ENCODE measurements at regions of chr18 and their contacts with region 1.

Region 1: GRCh38 chr18:62131301-62131909 is 55.5 kb downstream of the PIGN start:
- DNase-seq: peak; percentile 72
- H3K4me3 ChIP-seq: no peak overlapping the region
- H3K27ac ChIP-seq: no peak overlapping the region
- H3K4me1 ChIP-seq: peaks cover 16% of the 10 kb centered on the region
- H3K27me3 ChIP-seq: no peaks in the 10 kb centered on the region
- CTCF ChIP-seq: peak; percentile 70 to 79
- POLR2A ChIP-seq: no peak

Region 2: DNA sequence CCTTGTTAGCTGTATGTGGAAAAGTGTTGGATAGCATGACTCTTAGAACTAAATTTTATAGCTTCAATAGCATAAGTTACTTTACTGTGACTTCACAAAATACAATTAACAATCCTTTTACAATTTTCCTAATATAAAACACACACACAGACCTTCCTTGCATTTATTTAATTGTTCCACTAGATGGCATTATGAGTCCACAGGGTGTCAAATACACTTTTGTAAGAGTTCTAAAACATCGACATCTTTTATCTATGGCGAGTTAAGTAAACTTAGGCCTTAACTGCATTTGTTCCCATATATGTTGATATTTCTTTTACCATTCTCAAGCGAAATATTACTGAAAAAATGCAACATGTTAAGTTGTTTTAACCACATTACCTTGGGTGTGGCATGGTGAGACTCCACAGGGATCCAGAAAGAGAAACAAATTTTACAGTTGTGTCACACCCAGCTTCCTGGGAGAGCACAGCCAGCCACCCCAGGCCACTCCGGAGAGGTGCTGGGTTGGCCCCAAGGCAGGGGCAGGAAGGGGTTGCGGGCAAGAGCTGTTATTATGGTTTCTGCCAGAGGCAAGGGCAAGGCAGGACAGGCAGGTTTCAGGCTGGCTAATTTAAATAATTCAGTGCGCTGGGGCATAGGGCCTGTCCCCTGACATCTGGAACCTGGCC is 1446.4 kb before region 1 on chr18:
- CTCF ChIA-PET with region 1: no interaction called
- POLR2A ChIA-PET with region 1: no interaction called
- dilution Hi-C with region 1: no loop called
- intact Hi-C with region 1: loop called (anchors 5 kb)
- DNase-seq: peak; percentile 57
- H3K4me3 ChIP-seq: no peak overlapping the region
- H3K27ac ChIP-seq: no peak overlapping the region
- H3K4me1 ChIP-seq: no peaks in the 10 kb centered on the region
- H3K27me3 ChIP-seq: peaks cover 0 to 1% of the 10 kb centered on the region in 2 experiments
- CTCF ChIP-seq: peak; percentile 35 to 37
- POLR2A ChIP-seq: no peak

Region 3: DNA sequence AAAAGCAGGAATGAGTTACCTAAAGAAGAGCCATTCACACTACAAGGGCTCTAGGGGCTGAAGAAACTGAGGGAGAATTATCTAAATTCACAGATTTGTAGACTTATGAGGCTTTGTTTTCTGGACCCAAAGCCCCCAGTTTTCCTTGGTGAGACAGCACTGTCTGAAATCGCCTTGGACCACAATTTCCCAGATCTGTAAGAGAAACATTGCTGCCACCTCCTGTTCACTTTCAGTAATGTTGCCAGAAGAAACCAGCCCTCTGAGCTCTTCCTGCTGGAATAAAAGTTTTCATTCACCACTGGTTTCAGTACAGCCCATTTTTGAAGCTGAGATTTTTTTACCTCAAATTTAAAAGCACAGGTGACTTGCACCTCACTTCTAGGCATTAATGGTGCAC is 628.9 kb before region 1 on chr18:
- CTCF ChIA-PET with region 1: interaction called, 57 read pairs
- POLR2A ChIA-PET with region 1: no interaction called
- dilution Hi-C with region 1: no loop called
- intact Hi-C with region 1: loop called (anchors 1 kb)
- DNase-seq: peak; percentile 65
- H3K4me3 ChIP-seq: no peak overlapping the region
- H3K27ac ChIP-seq: no peak overlapping the region
- H3K4me1 ChIP-seq: no peaks in the 10 kb centered on the region
- H3K27me3 ChIP-seq: peaks cover 0 to 2% of the 10 kb centered on the region in 2 experiments
- CTCF ChIP-seq: peak; percentile 58 to 64
- POLR2A ChIP-seq: no peak

Region 4: GRCh38 chr18:61581578-61582201 is 549.7 kb before region 1 on chr18:
- CTCF ChIA-PET with region 1: interaction called, 89 read pairs
- POLR2A ChIA-PET with region 1: no interaction called
- dilution Hi-C with region 1: no loop called
- intact Hi-C with region 1: loop called (anchors 1 kb)
- DNase-seq: peak; percentile 77
- H3K4me3 ChIP-seq: peak overlapping the region; percentile 40 to 56 (median 54)
- H3K27ac ChIP-seq: peak overlapping the region; percentile 25
- H3K4me1 ChIP-seq: peaks cover 18% of the 10 kb centered on the region
- H3K27me3 ChIP-seq: no peaks in the 10 kb centered on the region
- CTCF ChIP-seq: peak; percentile 97
- POLR2A ChIP-seq: no peak

Region 5: GRCh38 chr18:61833387-61833786 is 298.0 kb before region 1 on chr18:
- CTCF ChIA-PET with region 1: interaction called, 8 read pairs
- POLR2A ChIA-PET with region 1: no interaction called
- dilution Hi-C with region 1: no loop called
- intact Hi-C with region 1: loop called (anchors 10 kb)
- DNase-seq: peak; percentile 93
- H3K4me3 ChIP-seq: peak overlapping the region in 1 of 3 experiments; percentile 31
- H3K27ac ChIP-seq: peak overlapping the region; percentile 75
- H3K4me1 ChIP-seq: peaks cover 43% of the 10 kb centered on the region
- H3K27me3 ChIP-seq: no peaks in the 10 kb centered on the region
- CTCF ChIP-seq: no peak
- POLR2A ChIP-seq: no peak

Region 6: GRCh38 chr18:61901323-61901986 is 229.9 kb before region 1 on chr18:
- CTCF ChIA-PET with region 1: interaction called, 15 read pairs
- POLR2A ChIA-PET with region 1: no interaction called
- dilution Hi-C with region 1: no loop called
- intact Hi-C with region 1: loop called (anchors 1 kb)
- DNase-seq: peak; percentile 74
- H3K4me3 ChIP-seq: no peak overlapping the region
- H3K27ac ChIP-seq: no peak overlapping the region
- H3K4me1 ChIP-seq: peaks cover 4% of the 10 kb centered on the region
- H3K27me3 ChIP-seq: no peaks in the 10 kb centered on the region
- CTCF ChIP-seq: peak; percentile 91 to 95
- POLR2A ChIP-seq: no peak

Region 7: GRCh38 chr18:61998957-61999356 is 132.4 kb before region 1 on chr18:
- CTCF ChIA-PET with region 1: interaction called, 10 read pairs
- POLR2A ChIA-PET with region 1: no interaction called
- dilution Hi-C with region 1: no loop called
- intact Hi-C with region 1: loop called (anchors 1 kb)
- DNase-seq: peak; percentile 95
- H3K4me3 ChIP-seq: no peak overlapping the region
- H3K27ac ChIP-seq: peak overlapping the region; percentile 83
- H3K4me1 ChIP-seq: peaks cover 49% of the 10 kb centered on the region
- H3K27me3 ChIP-seq: no peaks in the 10 kb centered on the region
- CTCF ChIP-seq: no peak
- POLR2A ChIP-seq: no peak

Measured in endothelial cell of umbilical vein (primary cell).